Activated T-helper 1 cell treated with anti-CD3 and anti-CD28 coated beads, Interleukin-12 subunit alpha, Interleukin-12 subunit beta, Interleukin-2, Interleukin-4 antibody, amounts not matched to agents 30 ng/mL and 10 ng/mL and 1 ng/mL, durations not matched to agents 14 hours and 24 hours and 36 hours (primary cell): ENCODE measurements at regions of chr17 and their contacts with region 1.

Region 1: GRCh38 chr17:44533533-44534246 is 23.6 kb upstream of the FZD2 start:
- DNase-seq: peak; percentile 72
- H3K4me3 Mint-ChIP-seq: no peak overlapping the region
- H3K27ac Mint-ChIP-seq: no peak overlapping the region
- H3K4me1 Mint-ChIP-seq: peaks cover 9% of the 10 kb centered on the region
- H3K27me3 Mint-ChIP-seq: peaks cover 11% of the 10 kb centered on the region

Region 2: DNA sequence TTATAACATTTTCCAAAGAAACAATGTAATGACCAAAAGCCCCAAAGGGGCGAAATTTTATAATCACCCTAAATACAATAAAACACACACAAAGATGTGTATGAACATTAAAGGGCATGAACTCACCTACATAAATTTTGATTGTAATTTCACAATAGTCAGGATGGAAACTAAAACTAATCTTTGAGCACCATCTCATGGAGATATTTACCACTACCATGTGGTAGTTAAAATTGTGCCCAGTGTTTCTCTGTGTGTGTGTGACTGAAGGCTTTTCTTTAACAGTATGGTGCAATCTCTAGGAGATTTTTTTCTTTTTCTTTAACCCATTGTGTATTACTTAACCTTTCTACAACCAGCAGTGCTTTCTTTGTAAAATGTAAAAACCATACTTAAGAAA is 102.9 kb after region 1 on chr17:
- intact Hi-C with region 1: loop called (anchors 1 kb)
- DNase-seq: no peak
- H3K4me3 Mint-ChIP-seq: no peak overlapping the region
- H3K27ac Mint-ChIP-seq: no peak overlapping the region
- H3K4me1 Mint-ChIP-seq: no peaks in the 10 kb centered on the region
- H3K27me3 Mint-ChIP-seq: peaks cover 9% of the 10 kb centered on the region

Region 3: GRCh38 chr17:44672479-44673093 is 138.9 kb after region 1 on chr17:
- intact Hi-C with region 1: loop called (anchors 1 kb)
- DNase-seq: no peak
- H3K4me3 Mint-ChIP-seq: no peak overlapping the region
- H3K27ac Mint-ChIP-seq: no peak overlapping the region
- H3K4me1 Mint-ChIP-seq: no peaks in the 10 kb centered on the region
- H3K27me3 Mint-ChIP-seq: no peaks in the 10 kb centered on the region

Region 4: GRCh38 chr17:44864866-44865660 is 331.4 kb after region 1 on chr17:
- intact Hi-C with region 1: loop called (anchors 10 kb)
- DNase-seq: peak; percentile 45
- H3K4me3 Mint-ChIP-seq: no peak overlapping the region
- H3K27ac Mint-ChIP-seq: no peak overlapping the region
- H3K4me1 Mint-ChIP-seq: no peaks in the 10 kb centered on the region
- H3K27me3 Mint-ChIP-seq: no peaks in the 10 kb centered on the region

Region 5: DNA sequence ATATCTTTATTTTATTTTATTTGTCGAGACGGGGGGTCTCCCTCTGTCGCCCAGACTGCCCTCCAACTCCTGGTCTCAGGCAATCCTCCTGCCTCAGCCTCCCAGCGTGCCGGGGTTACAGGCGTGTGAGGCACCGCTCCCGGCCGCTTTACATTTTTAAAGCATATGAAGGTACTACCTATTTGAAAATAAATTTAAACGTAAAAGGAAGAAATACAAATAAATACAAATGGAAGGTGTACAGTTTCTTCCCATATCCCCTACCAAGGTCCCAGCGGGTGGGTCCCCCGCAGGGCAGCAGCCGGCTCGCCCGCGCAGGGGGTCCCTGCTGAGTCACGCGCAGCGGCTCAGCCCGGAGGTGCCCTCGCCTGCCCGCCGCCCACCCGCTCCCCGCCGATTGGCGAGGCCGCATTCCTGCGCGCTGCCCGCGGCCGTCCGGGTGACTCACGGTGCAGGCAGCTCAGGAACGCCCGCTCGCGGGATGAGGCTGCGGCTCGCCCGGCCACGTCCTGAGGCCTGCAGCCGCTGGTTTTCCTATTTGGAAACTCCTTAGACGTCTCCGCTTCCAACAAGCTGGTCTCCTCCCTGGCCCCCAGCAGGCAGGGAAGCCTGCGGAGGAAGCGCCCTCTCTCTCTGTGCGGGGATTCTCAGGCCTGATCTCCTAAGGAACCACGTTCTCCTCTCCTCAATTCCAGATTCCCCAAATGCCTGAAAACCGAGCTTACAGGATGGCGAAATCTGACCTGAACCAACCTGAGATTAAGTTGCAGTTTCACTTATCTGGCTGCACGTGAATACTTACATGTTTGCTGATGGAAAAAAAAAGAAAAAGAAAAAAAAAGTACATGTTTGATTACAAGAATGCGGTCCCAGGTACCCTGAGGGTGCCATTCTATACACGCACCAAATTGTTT is 838.0 kb after region 1 on chr17:
- intact Hi-C with region 1: no loop called
- DNase-seq: no peak
- H3K4me3 Mint-ChIP-seq: no peak overlapping the region
- H3K27ac Mint-ChIP-seq: peak overlapping the region; percentile 31
- H3K4me1 Mint-ChIP-seq: peaks cover 19% of the 10 kb centered on the region
- H3K27me3 Mint-ChIP-seq: peaks cover 12% of the 10 kb centered on the region